Right ventricle myocardium inferior (tissue), 1 donor: ENCODE measurements at regions of chr1 and their contacts with region 1.

Region 1: GRCh38 chr1:165490175-165490574 is 45.2 kb upstream of the RXRG start:
- DNase-seq: peak; percentile 77
- ATAC-seq: peak; percentile 97

Region 2: DNA sequence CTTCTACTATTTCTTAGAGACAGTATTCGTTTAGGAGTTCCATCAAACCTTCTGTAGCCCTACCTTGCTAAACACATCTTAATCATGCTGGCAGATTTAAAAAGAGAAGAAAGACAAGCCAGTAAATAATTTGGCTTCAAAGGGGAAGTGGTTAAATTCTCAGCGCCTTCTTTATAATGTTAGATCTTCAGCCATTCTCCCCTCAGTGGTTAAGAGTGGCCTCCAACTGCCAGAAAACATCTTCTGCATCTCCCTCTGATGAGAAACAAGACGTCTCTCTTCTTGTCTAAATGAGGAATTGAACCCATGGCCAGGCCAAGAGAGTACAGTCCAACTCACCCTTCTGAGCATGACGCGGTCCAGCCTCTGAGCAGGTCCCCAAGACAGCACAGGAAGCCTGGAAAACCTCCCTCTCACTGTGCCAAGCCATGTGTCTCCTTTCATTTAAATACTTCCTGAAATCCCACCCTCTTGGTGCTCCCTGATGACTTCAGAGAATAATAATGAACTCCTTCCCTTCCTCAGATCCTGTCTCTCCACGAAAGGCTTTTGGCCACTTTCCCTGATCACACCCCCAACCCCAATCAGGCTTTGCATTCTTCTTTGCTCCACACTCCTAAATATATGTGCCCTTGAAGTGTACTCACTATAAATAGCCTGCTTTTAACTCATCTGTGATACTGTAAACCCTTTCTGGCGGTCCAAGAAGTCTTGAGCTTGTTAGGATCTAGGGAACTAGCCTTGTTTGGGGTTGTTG is 37.3 kb after region 1 on chr1:
- intact Hi-C with region 1: loop called (anchors 5 kb)
- DNase-seq: no peak
- ATAC-seq: no peak